Heart right ventricle (tissue), 16 donors: ENCODE measurements at regions of chr1 and their contacts with region 1.

Region 1: GRCh38 chr1:9960706-9961562 is 17.7 kb downstream of the NMNAT1 start:
- DNase-seq: no peak
- ATAC-seq: no peak
- H3K4me3 ChIP-seq: no peak overlapping the region
- H3K27ac ChIP-seq: no peak overlapping the region
- H3K4me1 ChIP-seq: peaks cover 0 to 5% (median 0%) of the 10 kb centered on the region in 9 donors
- H3K27me3 ChIP-seq: no peaks in the 10 kb centered on the region
- CTCF ChIP-seq: no peak

Region 2: DNA sequence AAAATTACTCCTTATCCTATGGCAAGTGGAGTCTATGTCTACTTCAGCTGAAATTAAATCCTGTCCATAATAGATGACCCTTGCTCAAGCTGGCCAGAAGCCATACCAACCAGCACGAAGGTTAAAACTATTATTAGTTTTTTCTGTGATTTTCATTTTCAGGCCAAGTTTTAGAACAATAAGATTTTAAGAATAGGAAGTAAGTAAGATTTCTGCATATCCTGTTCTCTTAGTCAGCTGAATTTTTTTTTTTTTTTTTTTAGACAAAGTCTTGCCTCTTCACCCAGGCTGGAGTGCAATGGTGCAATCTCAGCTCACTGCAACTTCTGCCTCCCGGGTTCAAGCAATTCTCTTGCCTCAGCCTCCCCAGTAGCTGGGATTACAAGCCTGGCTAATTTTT is 30.0 kb after region 1 on chr1:
- intact Hi-C with region 1: loop called in 2 of 10 experiments (anchors 5 kb)
- DNase-seq: peak in 1 of 2 donors; percentile 67
- ATAC-seq: peak in 7 of 8 donors; percentile 71 to 84 (median 79)
- H3K4me3 ChIP-seq: peak overlapping the region in 2 of 10 donors; percentile 5 to 16
- H3K27ac ChIP-seq: peak overlapping the region in 9 of 10 donors; percentile 57 to 83 (median 75)
- H3K4me1 ChIP-seq: peaks cover 0 to 45% (median 40%) of the 10 kb centered on the region in 9 donors
- H3K27me3 ChIP-seq: peaks cover 0 to 10% (median 0%) of the 10 kb centered on the region in 7 donors
- CTCF ChIP-seq: no peak

Region 3: DNA sequence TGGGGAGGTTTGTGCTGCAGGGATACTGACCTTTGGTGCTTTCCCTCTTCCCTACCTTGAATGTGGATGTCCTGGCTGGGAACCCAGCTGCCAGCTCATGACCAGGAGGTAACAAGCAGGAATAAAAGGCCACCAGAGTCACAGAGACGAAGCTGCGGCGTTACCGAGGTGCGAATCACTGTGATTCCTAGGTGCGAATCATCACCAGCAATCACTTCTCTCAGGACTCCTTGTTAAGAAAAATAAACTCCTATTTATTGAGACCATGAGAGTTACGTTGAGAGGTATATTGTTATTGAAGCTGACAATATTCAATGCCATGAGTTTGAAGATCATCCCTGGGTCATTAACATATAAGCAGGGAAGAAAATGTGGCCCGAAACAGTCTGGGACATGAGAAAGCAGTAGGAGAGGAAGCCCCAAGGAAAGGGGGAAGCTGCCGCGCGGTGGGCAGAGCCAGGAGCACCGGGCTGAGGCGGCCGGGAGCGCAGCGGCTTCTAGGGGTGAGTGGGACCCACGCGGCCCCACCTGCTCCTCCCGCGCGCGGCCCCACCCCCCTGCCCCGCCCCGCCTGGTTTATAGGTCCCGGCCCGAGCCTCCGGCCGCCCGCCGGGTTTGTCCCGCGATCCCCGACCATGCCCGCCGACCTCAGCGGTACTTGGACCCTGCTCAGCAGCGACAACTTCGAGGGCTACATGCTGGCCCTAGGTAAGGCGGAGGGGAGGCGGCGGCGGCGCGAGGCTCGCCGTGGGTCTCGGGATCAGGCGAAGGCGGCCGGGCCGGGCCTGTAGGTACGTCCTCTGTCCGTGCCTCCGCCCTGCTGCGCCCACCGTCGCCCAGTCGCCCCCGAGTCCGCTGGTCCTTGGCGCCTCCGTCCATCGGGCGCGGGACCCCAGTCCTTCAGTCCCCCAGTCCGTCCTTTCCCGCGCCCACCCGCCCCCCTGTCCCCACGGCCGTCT is 36.0 kb after region 1 on chr1 and contains the start of gene RBP7:
- intact Hi-C with region 1: loop called in 2 of 10 experiments (anchors 5 kb)
- DNase-seq: peak; percentile 6 to 37
- ATAC-seq: peak; percentile 63 to 75 (median 72)
- H3K4me3 ChIP-seq: peak within 1 kb of the TSS; percentile 65 to 77 (median 70)
- H3K27ac ChIP-seq: peak within 1 kb of the TSS; percentile 46 to 89 (median 81)
- H3K4me1 ChIP-seq: peaks cover 3 to 47% (median 31%) of the 10 kb centered on the region in 9 donors
- H3K27me3 ChIP-seq: peaks cover 0 to 41% (median 11%) of the 10 kb centered on the region in 7 donors
- CTCF ChIP-seq: peak in 2 of 9 donors; percentile 8 to 20
- total RNA-seq, gene RBP7: 15.5 to 46.4 (median 24.4) TPM